Activated naive CD4-positive, alpha-beta T cell treated with anti-CD3 and anti-CD28 coated beads, Interleukin-2, amount 10 ng/mL, durations not matched to agents 7 days and 5 days (primary cell): ENCODE measurements at regions of chr15 and their contacts with region 1.

Region 1: GRCh38 chr15:90362936-90363212 is 10.8 kb downstream of the ZNF774 start:
- DNase-seq: no peak
- H3K4me3 Mint-ChIP-seq: no peak overlapping the region
- H3K27ac Mint-ChIP-seq: no peak overlapping the region
- H3K4me1 Mint-ChIP-seq: peaks cover 29% of the 10 kb centered on the region
- H3K27me3 Mint-ChIP-seq: peaks cover 8% of the 10 kb centered on the region

Region 2: GRCh38 chr15:90165659-90166421 is 197.0 kb before region 1 on chr15:
- CTCF ChIA-PET with region 1: no interaction called
- DNase-seq: no peak
- H3K4me3 Mint-ChIP-seq: no peak overlapping the region
- H3K27ac Mint-ChIP-seq: no peak overlapping the region
- H3K4me1 Mint-ChIP-seq: peaks cover 5% of the 10 kb centered on the region
- H3K27me3 Mint-ChIP-seq: peaks cover 31% of the 10 kb centered on the region

Region 3: GRCh38 chr15:90376789-90377188 is 13.9 kb after region 1 on chr15:
- CTCF ChIA-PET with region 1: interaction called, 40 read pairs
- DNase-seq: peak; percentile 83
- H3K4me3 Mint-ChIP-seq: peak overlapping the region; percentile 14
- H3K27ac Mint-ChIP-seq: peak overlapping the region; percentile 85
- H3K4me1 Mint-ChIP-seq: peaks cover 53% of the 10 kb centered on the region
- H3K27me3 Mint-ChIP-seq: no peaks in the 10 kb centered on the region

Region 4: DNA sequence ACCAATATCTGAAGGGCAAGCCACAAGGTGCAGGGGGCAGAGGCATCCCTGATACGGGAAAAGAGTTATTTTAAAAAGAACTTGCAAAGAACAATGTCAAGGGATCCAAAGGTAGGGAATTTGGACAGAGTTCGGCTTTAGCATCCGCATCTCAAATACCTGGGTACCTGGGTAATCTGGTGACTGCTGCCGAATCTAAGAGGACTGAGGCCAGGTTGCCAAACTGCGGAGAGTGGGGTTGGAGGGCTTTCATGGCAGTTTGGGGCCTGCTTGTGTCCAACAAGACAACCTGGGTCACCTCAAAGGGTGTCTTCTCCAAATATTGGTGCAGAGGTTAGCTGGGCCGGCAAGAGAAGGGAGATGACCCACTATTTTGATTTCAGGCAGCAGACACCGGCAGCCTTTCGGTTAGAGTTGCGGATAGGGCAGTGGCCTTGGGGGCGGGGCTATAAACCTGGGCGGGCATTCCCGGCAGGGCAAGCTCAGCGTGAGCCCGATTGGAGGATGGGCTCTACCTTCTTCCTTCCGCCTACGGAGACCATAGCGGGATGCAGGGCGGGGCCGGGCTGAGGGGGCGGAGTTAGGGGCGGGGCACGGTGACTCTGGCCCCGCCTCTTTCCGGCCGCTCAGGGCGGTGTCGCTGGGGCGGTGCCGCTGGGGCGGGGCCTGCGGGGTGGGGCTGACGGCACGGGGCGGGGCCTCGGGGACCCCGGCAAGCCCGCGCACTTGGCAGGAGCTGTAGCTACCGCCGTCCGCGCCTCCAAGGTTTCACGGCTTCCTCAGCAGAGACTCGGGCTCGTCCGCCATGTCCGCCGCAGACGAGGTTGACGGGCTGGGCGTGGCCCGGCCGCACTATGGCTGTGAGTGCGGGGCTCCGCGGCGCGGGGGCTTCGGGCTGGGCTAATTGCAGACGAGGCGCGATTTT is 24.9 kb after region 1 on chr15 and contains the start of gene IQGAP1:
- CTCF ChIA-PET with region 1: interaction called, 10 read pairs
- DNase-seq: peak; percentile 99
- H3K4me3 Mint-ChIP-seq: peak within 1 kb of the TSS; percentile 93
- H3K27ac Mint-ChIP-seq: peak within 1 kb of the TSS; percentile 97
- H3K4me1 Mint-ChIP-seq: peaks cover 47% of the 10 kb centered on the region
- H3K27me3 Mint-ChIP-seq: no peaks in the 10 kb centered on the region

Region 5: DNA sequence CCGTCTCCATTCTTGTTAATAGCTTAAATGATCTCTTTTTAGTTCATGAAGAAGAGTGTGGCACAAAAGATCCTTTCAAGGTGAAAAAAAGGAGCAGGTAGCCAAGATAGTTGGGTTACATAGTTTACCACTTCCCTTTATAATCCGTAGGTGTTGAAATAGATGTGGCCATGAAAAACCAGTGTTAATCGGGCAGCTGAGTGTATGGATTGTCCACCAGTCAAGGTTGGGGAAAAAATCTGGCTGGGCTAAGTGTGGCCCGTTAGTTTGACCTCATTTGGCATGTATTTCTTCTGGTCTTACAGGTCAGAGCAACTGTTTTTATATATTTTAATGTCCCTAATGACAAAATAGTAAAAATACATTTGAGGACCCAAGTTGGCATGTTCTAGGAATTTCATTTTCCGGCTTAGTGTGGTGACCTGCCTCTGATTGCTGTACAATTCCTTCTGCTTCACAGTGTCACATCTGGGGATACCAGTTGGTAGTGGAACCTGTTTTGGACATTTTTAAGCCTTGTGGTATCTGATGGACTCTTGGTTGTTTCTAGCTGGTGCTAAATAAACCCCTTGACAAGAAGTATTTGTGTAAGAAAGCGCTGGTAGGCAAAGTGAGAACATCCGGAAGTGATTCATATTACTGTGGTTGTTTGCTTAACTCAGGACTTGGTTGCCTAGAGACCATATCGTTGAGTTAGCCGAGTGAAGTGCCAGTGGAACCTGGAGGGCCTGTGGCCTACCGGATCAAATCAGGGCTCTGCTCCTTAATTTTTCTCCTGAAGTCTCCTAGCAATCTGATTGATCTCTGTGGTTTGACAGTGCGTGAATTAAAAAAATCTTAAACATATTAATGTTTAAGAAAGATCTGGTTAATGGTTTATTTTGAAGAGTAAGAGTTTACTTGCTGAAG is 37.8 kb after region 1 on chr15:
- CTCF ChIA-PET with region 1: interaction called, 18 read pairs
- DNase-seq: peak; percentile 74
- H3K4me3 Mint-ChIP-seq: peak overlapping the region; percentile 51
- H3K27ac Mint-ChIP-seq: peak overlapping the region; percentile 90
- H3K4me1 Mint-ChIP-seq: peaks cover 58% of the 10 kb centered on the region
- H3K27me3 Mint-ChIP-seq: no peaks in the 10 kb centered on the region

Region 6: GRCh38 chr15:90425726-90426346 is 63.0 kb after region 1 on chr15:
- CTCF ChIA-PET with region 1: interaction called, 11 read pairs
- DNase-seq: no peak
- H3K4me3 Mint-ChIP-seq: no peak overlapping the region
- H3K27ac Mint-ChIP-seq: no peak overlapping the region
- H3K4me1 Mint-ChIP-seq: peaks cover 14% of the 10 kb centered on the region
- H3K27me3 Mint-ChIP-seq: no peaks in the 10 kb centered on the region